Astrocyte of the cerebellum (primary cell): ENCODE measurements at regions of chr12 and their contacts with region 1.

Region 1: GRCh38 chr12:104083769-104084475 is 19.6 kb downstream of the HCFC2 start:
- DNase-seq: no peak
- H3K4me3 ChIP-seq: no peak overlapping the region
- CTCF ChIP-seq: no peak

Region 2: GRCh38 chr12:103924761-103925641 is 158.9 kb before region 1 on chr12:
- in situ Hi-C with region 1: no loop called
- DNase-seq: peak; percentile 77
- H3K4me3 ChIP-seq: no peak overlapping the region
- CTCF ChIP-seq: no peak

Region 3: DNA sequence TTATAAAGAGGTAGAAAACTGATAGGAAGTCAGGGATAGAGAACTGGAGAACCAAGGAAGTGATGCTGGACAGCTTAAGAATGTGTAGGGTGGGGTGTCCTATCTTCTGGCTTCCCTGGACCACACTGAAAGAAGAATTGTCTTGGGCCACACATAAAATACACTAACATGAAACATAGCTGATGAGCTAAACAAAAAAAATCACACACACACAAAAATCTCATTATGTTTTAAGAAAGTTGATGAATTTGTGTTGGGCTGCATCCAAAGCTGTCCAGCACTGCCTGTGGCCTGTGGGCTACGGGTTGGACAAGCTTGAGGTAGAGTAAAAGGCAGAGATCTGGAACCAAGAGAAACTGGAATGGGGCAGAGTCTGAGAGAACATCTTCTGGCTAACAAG is 41.3 kb before region 1 on chr12:
- in situ Hi-C with region 1: loop called (anchors 5 kb)
- DNase-seq: no peak
- H3K4me3 ChIP-seq: no peak overlapping the region
- CTCF ChIP-seq: no peak

Region 4: DNA sequence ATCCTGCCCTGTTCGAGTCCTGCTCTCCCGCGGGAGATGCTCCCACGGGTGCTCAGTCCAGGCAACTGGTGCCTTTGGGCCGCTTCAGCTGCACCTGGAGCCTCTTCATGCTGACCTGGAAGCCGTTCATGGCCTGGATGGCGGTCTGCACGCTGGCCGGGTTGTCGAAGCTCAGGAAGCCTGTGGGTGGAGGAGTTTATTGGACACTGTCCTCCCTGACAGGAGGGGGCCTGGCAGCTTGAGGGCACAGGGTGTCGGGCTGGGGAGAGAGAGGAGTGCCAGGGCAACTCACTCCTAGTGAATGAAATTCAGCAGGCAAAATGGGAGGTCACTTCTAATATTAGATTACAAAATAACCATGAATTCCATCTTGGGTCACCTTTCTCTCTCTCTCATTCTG is 63.4 kb after region 1 on chr12:
- in situ Hi-C with region 1: no loop called
- DNase-seq: no peak
- H3K4me3 ChIP-seq: no peak overlapping the region
- CTCF ChIP-seq: no peak